Activated CD8-positive, alpha-beta T cell treated with anti-CD3 and anti-CD28 coated beads for 36 hours (primary cell): ENCODE measurements at regions of chr10 and their contacts with region 1.

Region 1: GRCh38 chr10:71569775-71570588 is 149.6 kb downstream of the C10orf105 start:
- DNase-seq: peak; percentile 87
- ATAC-seq: peak; percentile 79
- H3K4me3 Mint-ChIP-seq: no peak overlapping the region
- H3K27ac Mint-ChIP-seq: no peak overlapping the region
- H3K4me1 Mint-ChIP-seq: no peaks in the 10 kb centered on the region
- H3K27me3 Mint-ChIP-seq: no peaks in the 10 kb centered on the region
- CTCF ChIP-seq: peak; percentile 84

Region 2: DNA sequence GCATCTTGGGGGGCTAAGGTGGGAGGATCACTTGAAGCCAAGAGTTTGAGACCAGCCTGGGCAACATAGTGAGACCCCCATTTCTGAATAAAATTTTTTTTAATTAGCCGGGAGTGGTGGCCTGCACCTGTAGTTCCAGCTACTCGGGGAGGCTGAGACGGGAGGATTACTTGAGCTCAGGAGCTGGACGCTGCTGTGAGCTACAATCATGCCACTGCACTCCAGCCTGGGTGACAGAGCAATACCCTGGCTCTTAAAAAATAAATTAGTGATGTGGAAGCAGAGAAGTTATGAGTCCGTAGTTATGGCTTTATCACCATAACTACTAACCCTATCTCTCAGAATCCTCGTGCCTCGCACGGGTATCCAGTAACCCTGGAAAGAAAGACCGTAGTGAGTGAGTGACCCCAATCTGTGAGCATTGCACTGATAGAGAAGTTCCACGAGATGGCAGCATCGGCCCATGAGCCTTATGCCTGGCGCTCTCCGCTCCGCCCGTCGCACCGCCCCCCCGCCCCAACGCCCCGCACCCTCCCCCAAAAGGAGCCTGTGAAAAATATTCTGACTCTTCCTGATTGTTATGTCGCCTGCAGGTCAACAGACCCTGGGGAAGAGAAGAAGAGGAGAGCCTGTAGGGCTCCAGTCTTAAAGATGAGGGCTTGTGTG is 255.8 kb before region 1 on chr10:
- CTCF ChIA-PET with region 1: interaction called, 48 read pairs
- POLR2A ChIA-PET with region 1: no interaction called
- intact Hi-C with region 1: loop called (anchors 5 kb)
- DNase-seq: peak; percentile 48
- ATAC-seq: peak; percentile 25
- H3K4me3 Mint-ChIP-seq: no peak overlapping the region
- H3K27ac Mint-ChIP-seq: no peak overlapping the region
- H3K4me1 Mint-ChIP-seq: peaks cover 20% of the 10 kb centered on the region
- H3K27me3 Mint-ChIP-seq: peaks cover 5% of the 10 kb centered on the region
- CTCF ChIP-seq: peak; percentile 92

Region 3: DNA sequence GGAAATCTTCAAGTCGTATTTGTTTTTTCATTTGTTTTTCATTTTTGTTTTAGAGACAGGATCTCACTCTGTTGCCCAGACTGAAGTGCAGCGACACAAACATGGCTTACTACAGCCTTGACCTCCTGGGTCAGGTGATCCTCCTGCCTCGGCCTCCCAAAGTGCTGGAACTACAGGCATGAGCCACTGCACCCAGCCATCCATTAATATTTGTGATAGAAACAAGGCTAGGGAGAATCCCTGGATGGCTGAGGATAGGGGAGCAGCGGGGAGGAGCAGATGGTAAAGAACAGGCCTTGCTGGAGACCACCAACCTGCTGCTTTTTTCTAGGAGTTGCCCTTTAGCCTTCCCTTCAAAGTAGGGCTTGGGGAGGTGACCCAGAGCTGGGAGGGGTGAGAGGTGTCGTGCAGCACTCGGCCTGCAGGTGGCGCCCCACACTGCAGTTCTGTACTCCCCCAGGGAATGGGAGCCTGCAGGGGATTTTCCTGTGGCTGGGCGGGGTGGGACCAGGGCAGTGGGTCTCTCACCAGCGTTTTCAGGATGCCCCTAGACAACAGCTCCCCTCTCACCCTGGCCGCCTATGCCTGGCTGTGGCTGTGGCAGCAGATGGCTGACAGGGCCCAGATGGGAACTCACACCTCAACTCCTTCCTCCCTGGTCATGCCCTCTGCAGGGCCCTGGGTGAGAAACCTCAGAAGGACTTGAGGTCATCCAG is 185.9 kb before region 1 on chr10:
- CTCF ChIA-PET with region 1: interaction called, 20 read pairs
- POLR2A ChIA-PET with region 1: no interaction called
- intact Hi-C with region 1: no loop called
- DNase-seq: peak; percentile 84
- ATAC-seq: peak; percentile 97
- H3K4me3 Mint-ChIP-seq: no peak overlapping the region
- H3K27ac Mint-ChIP-seq: no peak overlapping the region
- H3K4me1 Mint-ChIP-seq: no peaks in the 10 kb centered on the region
- H3K27me3 Mint-ChIP-seq: peaks cover 2% of the 10 kb centered on the region
- CTCF ChIP-seq: peak; percentile 88

Region 4: GRCh38 chr10:71486484-71487114 is 83.4 kb before region 1 on chr10:
- CTCF ChIA-PET with region 1: interaction called, 9 read pairs
- POLR2A ChIA-PET with region 1: no interaction called
- intact Hi-C with region 1: loop called (anchors 2 kb)
- DNase-seq: peak; percentile 77
- ATAC-seq: peak; percentile 74
- H3K4me3 Mint-ChIP-seq: no peak overlapping the region
- H3K27ac Mint-ChIP-seq: no peak overlapping the region
- H3K4me1 Mint-ChIP-seq: no peaks in the 10 kb centered on the region
- H3K27me3 Mint-ChIP-seq: peaks cover 2% of the 10 kb centered on the region
- CTCF ChIP-seq: peak; percentile 70

Region 5: GRCh38 chr10:71558991-71559390 is 11.0 kb before region 1 on chr10:
- CTCF ChIA-PET with region 1: interaction called, 15 read pairs
- POLR2A ChIA-PET with region 1: no interaction called
- intact Hi-C with region 1: no loop called
- DNase-seq: no peak
- ATAC-seq: no peak
- H3K4me3 Mint-ChIP-seq: no peak overlapping the region
- H3K27ac Mint-ChIP-seq: no peak overlapping the region
- H3K4me1 Mint-ChIP-seq: no peaks in the 10 kb centered on the region
- H3K27me3 Mint-ChIP-seq: peaks cover 20% of the 10 kb centered on the region
- CTCF ChIP-seq: no peak

Region 6: DNA sequence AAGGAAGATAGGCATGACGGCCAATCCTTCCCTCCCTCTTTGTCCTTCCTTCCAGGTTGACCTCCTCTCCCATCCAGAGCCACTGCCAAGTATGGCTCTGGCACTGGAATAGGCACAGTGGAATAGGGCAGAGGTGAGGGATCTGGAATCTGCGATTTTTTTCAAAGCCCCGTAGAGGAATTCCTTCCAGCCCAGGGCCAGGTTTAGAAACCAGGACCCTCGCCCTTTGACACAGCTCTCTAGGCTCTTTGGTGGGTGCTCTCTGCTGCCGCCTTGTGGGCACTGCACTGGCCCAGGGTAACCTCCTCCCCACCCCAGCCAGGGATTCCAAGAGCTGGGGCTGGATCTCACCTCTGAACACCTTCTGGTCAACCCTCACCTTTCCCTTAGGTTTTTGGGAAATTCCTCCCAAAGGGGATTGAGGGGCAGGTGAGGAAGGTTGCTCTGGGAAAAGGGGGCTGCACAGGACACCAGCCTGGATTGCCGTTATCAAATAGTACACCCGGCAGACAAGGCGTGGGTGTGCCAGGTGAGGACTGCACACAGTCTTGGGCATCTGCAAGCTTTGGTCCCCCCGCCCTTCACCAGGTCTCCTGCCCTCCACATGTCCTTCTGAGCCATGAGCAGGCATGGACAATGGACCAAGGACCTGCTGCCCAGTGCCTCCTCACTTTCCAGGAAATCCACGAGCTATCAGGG is 126.8 kb after region 1 on chr10:
- CTCF ChIA-PET with region 1: interaction called, 13 read pairs
- POLR2A ChIA-PET with region 1: no interaction called
- intact Hi-C with region 1: no loop called
- DNase-seq: peak; percentile 83
- ATAC-seq: peak; percentile 38
- H3K4me3 Mint-ChIP-seq: no peak overlapping the region
- H3K27ac Mint-ChIP-seq: no peak overlapping the region
- H3K4me1 Mint-ChIP-seq: peaks cover 55% of the 10 kb centered on the region
- H3K27me3 Mint-ChIP-seq: no peaks in the 10 kb centered on the region
- CTCF ChIP-seq: peak; percentile 94

Region 7: GRCh38 chr10:71740069-71740468 is 170.1 kb after region 1 on chr10:
- CTCF ChIA-PET with region 1: no interaction called
- POLR2A ChIA-PET with region 1: no interaction called
- intact Hi-C with region 1: no loop called
- DNase-seq: no peak
- ATAC-seq: no peak
- H3K4me3 Mint-ChIP-seq: no peak overlapping the region
- H3K27ac Mint-ChIP-seq: peak overlapping the region; percentile 97
- H3K4me1 Mint-ChIP-seq: peaks cover 100% of the 10 kb centered on the region
- H3K27me3 Mint-ChIP-seq: no peaks in the 10 kb centered on the region
- CTCF ChIP-seq: no peak

Region 8: DNA sequence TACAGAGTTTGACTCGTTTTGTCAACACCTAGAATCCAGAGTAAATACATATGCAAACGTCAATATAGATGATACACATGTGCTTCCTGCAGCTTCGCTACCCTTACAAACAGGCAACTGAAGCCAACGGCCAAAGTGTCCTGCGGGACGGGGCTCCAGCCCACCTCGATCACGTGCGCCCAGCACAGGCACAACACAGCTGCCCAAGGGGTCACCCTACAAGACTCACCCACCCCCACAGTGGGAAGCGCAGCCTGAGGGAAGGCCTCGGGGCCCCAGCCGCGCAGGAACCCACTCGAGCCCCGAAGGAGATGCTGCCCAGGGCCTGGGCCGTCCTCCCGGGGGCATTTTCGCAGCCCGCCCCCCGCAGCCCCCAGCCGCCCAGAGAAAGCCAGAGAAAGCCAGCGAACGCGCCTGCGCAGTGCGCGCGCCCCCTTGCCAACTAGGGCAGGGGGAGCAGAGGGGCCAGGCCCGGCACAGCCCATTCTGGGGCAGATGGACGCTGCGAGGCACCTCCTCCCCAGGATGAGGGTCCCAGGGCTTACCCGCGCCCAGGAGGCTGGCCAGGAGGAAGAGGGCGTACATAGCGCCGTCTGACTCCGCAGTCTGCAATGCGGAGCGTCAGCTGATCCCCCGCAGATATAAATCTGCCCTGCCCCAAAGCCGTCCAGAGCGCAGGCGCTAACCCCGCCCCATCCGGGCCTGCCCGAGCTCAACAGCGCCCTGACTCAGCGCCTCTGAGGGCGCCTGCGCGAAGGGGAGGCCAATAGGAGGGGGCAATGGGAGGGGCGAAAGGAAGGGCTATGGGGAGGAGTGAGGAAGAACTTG is 280.9 kb after region 1 on chr10 and contains the start of gene PSAP:
- CTCF ChIA-PET with region 1: no interaction called
- POLR2A ChIA-PET with region 1: no interaction called
- intact Hi-C with region 1: no loop called
- DNase-seq: peak; percentile 99
- ATAC-seq: peak; percentile 99
- H3K4me3 Mint-ChIP-seq: peak within 1 kb of the TSS; percentile 97
- H3K27ac Mint-ChIP-seq: peak within 1 kb of the TSS; percentile 79
- H3K4me1 Mint-ChIP-seq: peaks cover 43% of the 10 kb centered on the region
- H3K27me3 Mint-ChIP-seq: no peaks in the 10 kb centered on the region
- CTCF ChIP-seq: no peak
- total RNA-seq, gene PSAP: 94.2 to 101 TPM